Activated B cell treated with CpG ODN at 0.5 μM for 24 hours (primary cell): ENCODE measurements at regions of chr11 and their contacts with region 1.

Region 1: GRCh38 chr11:1050581-1051355 is 14.2 kb upstream of the MUC6 start:
- DNase-seq: peak; percentile 63
- ATAC-seq: peak; percentile 100
- H3K4me3 Mint-ChIP-seq: no peak overlapping the region
- H3K27ac Mint-ChIP-seq: no peak overlapping the region
- H3K4me1 Mint-ChIP-seq: no peaks in the 10 kb centered on the region
- H3K27me3 Mint-ChIP-seq: peaks cover 12% of the 10 kb centered on the region
- CTCF ChIP-seq: no peak

Region 2: DNA sequence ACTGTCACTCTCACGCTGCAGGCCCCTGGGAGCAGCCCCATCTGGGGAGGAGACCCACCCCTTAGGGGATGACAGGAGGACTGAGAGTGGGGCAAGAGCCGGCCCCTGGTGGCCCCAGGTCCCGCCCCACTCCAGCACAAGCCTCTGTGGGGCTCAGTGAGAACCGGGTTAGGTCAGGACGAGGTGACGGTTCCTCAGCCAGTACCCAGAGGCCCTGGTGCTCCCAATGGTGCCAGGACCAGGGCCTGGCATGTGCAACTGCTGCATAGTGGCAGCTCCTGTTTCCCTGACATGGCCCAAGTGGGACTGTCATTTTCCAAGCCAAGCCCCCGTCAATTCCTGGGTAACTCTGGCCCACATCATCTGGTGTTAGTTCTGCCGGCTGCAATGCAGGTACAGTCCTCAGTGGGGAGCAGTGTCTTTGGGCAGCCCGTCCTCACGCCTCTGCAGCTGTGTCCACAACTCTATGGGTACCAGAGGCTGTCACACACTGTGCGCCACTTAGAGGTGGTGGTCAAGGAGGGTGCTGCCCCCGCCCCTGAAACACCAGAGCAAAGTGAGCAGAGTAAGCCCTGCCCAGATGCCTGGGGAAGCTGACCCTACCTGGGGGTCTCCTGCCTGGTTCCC is 156.1 kb before region 1 on chr11:
- CTCF ChIA-PET with region 1: no interaction called
- POLR2A ChIA-PET with region 1: no interaction called
- intact Hi-C with region 1: no loop called
- DNase-seq: no peak
- ATAC-seq: no peak
- H3K4me3 Mint-ChIP-seq: no peak overlapping the region
- H3K27ac Mint-ChIP-seq: no peak overlapping the region
- H3K4me1 Mint-ChIP-seq: no peaks in the 10 kb centered on the region
- H3K27me3 Mint-ChIP-seq: no peaks in the 10 kb centered on the region
- CTCF ChIP-seq: no peak

Region 3: DNA sequence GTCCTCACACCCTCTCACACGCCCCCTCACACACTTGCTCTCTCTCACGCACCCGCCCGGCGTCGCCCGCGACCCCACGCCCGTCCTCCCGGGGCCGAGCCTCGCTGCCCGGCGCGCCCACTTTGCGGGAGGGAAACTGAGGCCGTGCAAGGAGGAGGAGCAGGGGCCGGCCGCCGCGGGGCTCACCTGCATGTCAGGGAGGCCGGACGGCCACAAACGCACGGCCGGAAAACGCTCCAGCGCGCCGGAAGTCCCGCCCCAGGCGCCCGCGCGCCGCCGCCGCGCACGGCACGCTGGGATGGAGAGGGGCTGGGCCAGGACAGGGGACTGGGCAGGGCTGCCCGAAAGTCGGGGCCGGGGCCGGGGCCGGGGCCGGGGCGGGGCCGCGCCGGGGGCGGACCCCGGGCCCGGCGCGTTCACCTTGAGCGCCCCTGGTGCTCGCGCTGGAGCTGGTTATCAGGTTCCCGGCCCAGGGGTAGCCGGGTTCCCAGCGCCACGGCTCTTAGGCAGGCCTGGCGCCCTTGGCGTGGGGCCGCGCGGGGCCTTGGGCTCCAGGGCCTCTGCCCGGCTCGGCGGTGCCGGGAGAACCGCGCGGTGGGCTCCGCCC is 140.1 kb before region 1 on chr11 and contains the start of gene CHID1:
- CTCF ChIA-PET with region 1: no interaction called
- POLR2A ChIA-PET with region 1: no interaction called
- intact Hi-C with region 1: loop called (anchors 2 kb)
- DNase-seq: peak; percentile 91
- ATAC-seq: peak; percentile 95
- H3K4me3 Mint-ChIP-seq: peak within 1 kb of the TSS; percentile 90
- H3K27ac Mint-ChIP-seq: peak within 1 kb of the TSS; percentile 72
- H3K4me1 Mint-ChIP-seq: peaks cover 31% of the 10 kb centered on the region
- H3K27me3 Mint-ChIP-seq: no peaks in the 10 kb centered on the region
- CTCF ChIP-seq: no peak
- total RNA-seq, gene CHID1: 43.9 and 45.7 TPM in 2 replicates

Region 4: DNA sequence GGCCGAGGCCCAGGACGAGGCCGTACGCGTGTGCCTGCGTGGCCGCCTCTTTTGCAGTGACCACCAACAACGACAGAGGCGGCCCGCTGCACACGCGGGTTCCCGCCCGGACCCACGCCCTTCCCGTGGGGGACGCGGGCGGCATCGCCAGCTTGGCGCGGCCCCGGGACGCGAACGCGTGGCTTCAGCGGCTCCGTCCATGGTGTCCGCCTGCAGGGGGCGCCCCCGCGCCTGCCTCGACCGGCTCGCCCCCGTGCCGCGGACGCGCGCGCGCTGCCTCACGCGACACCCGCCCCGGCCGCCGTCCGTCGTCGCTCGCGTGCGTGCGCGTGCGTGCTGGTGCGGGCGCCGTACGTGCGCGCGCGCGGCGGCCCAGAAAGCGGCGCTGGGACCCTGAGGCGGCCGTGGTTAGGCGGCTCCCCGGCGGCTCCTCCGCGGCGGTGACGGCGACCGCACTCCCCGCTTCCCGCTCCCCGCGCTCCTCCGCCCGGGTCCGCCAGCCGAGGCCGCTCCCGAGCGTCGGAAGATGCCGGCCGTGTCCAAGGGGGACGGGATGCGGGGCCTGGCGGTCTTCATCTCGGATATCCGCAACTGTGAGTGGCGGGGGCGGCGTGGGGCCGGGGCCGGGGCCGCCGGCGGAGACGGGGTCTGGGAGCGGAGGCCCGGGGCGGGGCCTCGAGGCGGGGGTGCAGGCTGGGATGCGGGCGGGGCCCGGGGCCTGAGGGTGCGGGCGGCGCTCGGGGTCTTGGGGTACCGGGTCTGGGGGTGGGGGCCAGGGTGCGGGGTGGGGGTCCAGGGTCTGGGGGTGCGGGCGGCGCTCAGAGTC is 125.1 kb before region 1 on chr11 and contains the start of gene AP2A2:
- CTCF ChIA-PET with region 1: no interaction called
- POLR2A ChIA-PET with region 1: no interaction called
- intact Hi-C with region 1: loop called (anchors 1 kb)
- DNase-seq: peak; percentile 96
- ATAC-seq: peak; percentile 90
- H3K4me3 Mint-ChIP-seq: peak within 1 kb of the TSS; percentile 81
- H3K27ac Mint-ChIP-seq: peak within 1 kb of the TSS; percentile 56
- H3K4me1 Mint-ChIP-seq: peaks cover 25% of the 10 kb centered on the region
- H3K27me3 Mint-ChIP-seq: no peaks in the 10 kb centered on the region
- CTCF ChIP-seq: peak; percentile 51
- total RNA-seq, gene AP2A2: 49.6 and 54.3 TPM in 2 replicates

Region 5: GRCh38 chr11:1036303-1036923 is 14.4 kb before region 1 on chr11 and contains the start of gene MUC6:
- CTCF ChIA-PET with region 1: no interaction called
- POLR2A ChIA-PET with region 1: no interaction called
- intact Hi-C with region 1: no loop called
- DNase-seq: no peak
- ATAC-seq: no peak
- H3K4me3 Mint-ChIP-seq: no peak within 1 kb of the TSS
- H3K27ac Mint-ChIP-seq: no peak within 1 kb of the TSS
- H3K4me1 Mint-ChIP-seq: no peaks in the 10 kb centered on the region
- H3K27me3 Mint-ChIP-seq: no peaks in the 10 kb centered on the region
- CTCF ChIP-seq: no peak
- total RNA-seq, gene MUC6: not detected in 2 replicates